ENCODE measurements at regions of chr14 and their contacts with region 1.

Region 1: DNA sequence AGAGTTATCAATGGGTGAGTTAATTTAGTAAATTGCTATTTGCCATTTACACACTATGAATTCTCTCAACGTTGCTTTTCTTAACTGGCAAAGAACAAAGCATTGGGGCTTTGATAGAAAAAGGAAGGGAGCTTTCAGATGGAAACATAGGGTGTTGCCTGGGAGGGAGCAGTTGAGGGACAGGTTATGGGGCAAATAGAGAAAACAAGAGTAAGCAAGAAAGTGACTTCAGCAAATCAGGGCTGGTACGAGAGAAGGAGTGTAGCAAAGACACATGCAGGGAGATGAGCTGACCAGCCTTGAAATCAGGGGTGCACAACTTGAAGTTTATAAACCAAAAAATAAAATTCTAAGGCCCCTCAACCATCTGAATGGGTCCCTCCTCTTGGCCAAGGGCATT is 15.7 kb downstream of the ESR2 start:
- DNase-seq: no peak
- ATAC-seq: no peak
- H3K4me3 Mint-ChIP-seq: no peak overlapping the region
- H3K27ac Mint-ChIP-seq: no peak overlapping the region
- H3K4me1 Mint-ChIP-seq: peaks cover 10% of the 10 kb centered on the region
- H3K27me3 Mint-ChIP-seq: no peaks in the 10 kb centered on the region
- CTCF ChIP-seq: no peak

Region 2: GRCh38 chr14:64109821-64110554 is 168.5 kb before region 1 on chr14:
- CTCF ChIA-PET with region 1: no interaction called
- POLR2A ChIA-PET with region 1: interaction called, 11 read pairs
- intact Hi-C with region 1: no loop called
- DNase-seq: no peak
- ATAC-seq: no peak
- H3K4me3 Mint-ChIP-seq: no peak overlapping the region
- H3K27ac Mint-ChIP-seq: no peak overlapping the region
- H3K4me1 Mint-ChIP-seq: no peaks in the 10 kb centered on the region
- H3K27me3 Mint-ChIP-seq: no peaks in the 10 kb centered on the region
- CTCF ChIP-seq: no peak